ENCODE measurements at regions of chr6 and their contacts with region 1.

Region 1: GRCh38 chr6:121305957-121306607 is 28.2 kb downstream of the TBC1D32 start:
- DNase-seq: no peak
- H3K4me3 Mint-ChIP-seq: no peak overlapping the region
- H3K27ac Mint-ChIP-seq: no peak overlapping the region
- H3K4me1 Mint-ChIP-seq: peaks cover 5% of the 10 kb centered on the region
- H3K27me3 Mint-ChIP-seq: no peaks in the 10 kb centered on the region

Region 2: DNA sequence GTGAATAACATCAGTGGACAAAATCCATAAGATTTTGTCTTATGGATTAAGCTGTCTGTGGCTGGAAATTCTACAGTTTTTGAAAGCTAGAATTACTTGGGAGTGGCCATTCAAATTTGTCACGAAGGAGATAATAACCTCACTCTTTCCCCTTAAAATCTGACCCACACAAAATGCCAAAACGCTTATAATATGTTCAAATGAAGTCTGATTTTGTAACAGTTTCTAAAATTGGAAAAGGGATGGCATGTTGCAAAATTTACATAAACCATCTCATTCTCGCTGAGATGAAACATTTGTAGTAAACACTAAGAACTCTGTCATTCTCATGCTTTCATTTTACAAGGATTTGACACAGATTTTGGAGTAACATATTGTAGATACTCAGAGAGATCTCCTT is 242.0 kb after region 1 on chr6:
- intact Hi-C with region 1: no loop called
- DNase-seq: no peak
- H3K4me3 Mint-ChIP-seq: no peak overlapping the region
- H3K27ac Mint-ChIP-seq: no peak overlapping the region
- H3K4me1 Mint-ChIP-seq: no peaks in the 10 kb centered on the region
- H3K27me3 Mint-ChIP-seq: no peaks in the 10 kb centered on the region

Region 3: GRCh38 chr6:121764493-121764892 is 458.4 kb after region 1 on chr6:
- intact Hi-C with region 1: no loop called
- DNase-seq: no peak
- H3K4me3 Mint-ChIP-seq: no peak overlapping the region
- H3K27ac Mint-ChIP-seq: no peak overlapping the region
- H3K4me1 Mint-ChIP-seq: peaks cover 16% of the 10 kb centered on the region
- H3K27me3 Mint-ChIP-seq: no peaks in the 10 kb centered on the region

Region 4: GRCh38 chr6:121867095-121867494 is 561.0 kb after region 1 on chr6:
- intact Hi-C with region 1: no loop called
- DNase-seq: no peak
- H3K4me3 Mint-ChIP-seq: no peak overlapping the region
- H3K27ac Mint-ChIP-seq: no peak overlapping the region
- H3K4me1 Mint-ChIP-seq: no peaks in the 10 kb centered on the region
- H3K27me3 Mint-ChIP-seq: no peaks in the 10 kb centered on the region

Region 5: DNA sequence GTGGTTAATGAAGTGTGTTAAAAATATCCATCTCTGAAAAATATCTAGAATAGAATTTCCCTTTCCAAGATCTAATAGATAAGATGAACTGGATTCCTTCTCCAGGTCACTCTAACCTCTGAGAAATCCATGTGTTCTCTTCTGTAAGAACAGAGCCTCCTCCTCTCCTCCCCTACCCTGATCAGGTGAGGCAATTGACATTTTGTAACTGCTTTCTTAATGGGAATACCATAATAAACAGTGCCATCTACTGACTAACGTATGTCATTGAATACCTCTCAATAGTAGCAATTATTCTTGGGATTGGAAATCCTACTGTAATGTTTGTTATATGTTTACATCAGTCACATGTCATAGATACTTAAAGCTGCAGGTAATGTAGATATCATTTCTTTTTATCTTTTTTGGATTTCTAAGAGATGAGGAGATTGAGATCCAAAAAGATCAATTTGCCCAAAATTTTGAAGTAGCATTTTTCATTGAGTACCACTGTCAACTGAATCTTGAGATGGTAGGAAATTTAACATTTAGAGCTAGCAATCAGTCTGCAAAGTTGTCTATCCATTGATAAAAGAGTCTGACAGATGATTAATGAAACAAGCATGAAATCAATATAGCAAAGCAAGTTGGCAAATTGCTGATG is 727.6 kb after region 1 on chr6:
- intact Hi-C with region 1: loop called (anchors 5 kb)
- DNase-seq: no peak
- H3K4me3 Mint-ChIP-seq: no peak overlapping the region
- H3K27ac Mint-ChIP-seq: no peak overlapping the region
- H3K4me1 Mint-ChIP-seq: no peaks in the 10 kb centered on the region
- H3K27me3 Mint-ChIP-seq: peaks cover 3% of the 10 kb centered on the region